ENCODE measurements at regions of chr1 and their contacts with region 1.

Region 1: GRCh38 chr1:25487628-25488027 is 55.8 kb upstream of the LDLRAP1 start:
- DNase-seq: peak; percentile 51
- H3K4me3 Mint-ChIP-seq: no peak overlapping the region
- H3K27ac Mint-ChIP-seq: peak overlapping the region; percentile 5
- H3K4me1 Mint-ChIP-seq: peaks cover 5% of the 10 kb centered on the region
- H3K27me3 Mint-ChIP-seq: no peaks in the 10 kb centered on the region

Region 2: DNA sequence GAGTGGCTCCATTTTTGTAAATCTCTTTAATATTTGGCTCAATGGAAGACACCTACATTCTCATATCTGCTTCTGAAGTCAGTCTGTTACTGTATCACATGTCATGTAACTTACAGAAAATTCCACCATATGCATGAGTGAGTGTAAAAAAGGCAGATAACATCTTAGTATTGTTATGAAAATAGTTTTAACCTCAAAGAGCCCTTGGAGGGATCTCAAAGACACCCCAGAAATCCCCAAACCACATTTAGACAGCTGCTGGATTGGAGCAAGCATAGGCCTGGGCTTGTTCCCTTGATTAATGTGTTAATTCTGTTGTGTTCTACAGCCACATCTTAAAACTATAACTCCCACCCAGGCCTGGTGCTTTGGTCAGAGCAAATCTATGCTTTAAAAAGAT is 40.1 kb before region 1 on chr1:
- CTCF ChIA-PET with region 1: interaction called, 11 read pairs
- intact Hi-C with region 1: no loop called
- DNase-seq: peak; percentile 50
- H3K4me3 Mint-ChIP-seq: no peak overlapping the region
- H3K27ac Mint-ChIP-seq: peak overlapping the region; percentile 77
- H3K4me1 Mint-ChIP-seq: peaks cover 34% of the 10 kb centered on the region
- H3K27me3 Mint-ChIP-seq: no peaks in the 10 kb centered on the region

Region 3: DNA sequence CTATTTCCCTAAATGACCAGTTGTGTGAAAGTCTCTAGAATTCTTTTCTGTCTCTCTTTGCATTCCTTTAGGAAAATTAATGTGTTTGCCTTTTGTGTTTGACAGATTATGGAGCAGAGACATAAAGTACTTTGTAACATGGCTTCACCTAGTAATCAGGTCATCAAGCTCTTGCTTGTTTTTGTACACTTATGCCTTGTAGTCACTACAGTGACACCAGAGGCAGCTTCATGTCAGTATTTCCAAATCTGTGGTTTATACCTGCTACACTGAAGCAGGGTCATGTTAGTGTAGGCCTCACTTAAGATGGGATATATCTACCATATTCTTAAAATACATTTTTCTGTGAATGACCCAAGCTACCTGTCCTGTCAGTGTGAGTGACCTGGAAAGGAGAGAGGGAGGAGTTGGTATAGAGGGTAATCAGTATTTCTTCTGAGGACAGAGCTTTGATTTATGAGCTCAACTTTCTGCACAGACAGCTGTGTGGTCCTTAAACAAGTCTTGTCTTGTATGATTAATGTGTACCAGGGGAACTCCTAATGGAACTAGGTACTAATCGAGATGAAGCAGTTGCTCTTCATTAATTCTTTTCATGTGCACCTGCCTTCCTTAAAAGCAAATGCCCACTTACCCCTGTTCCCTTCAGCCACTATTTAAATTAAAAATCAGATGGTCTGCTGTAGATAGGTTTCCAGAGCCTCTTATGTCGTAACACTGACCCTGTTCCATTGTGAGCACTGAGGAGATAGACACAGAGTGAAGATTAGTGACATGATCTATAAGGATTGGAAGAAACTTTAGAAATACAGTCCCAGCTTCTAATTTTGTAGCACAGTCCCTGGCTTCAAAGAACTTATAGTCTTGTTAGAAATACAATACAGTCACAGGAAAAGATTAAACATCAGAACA is 11.2 kb before region 1 on chr1:
- CTCF ChIA-PET with region 1: interaction called, 39 read pairs
- intact Hi-C with region 1: no loop called
- DNase-seq: no peak
- H3K4me3 Mint-ChIP-seq: no peak overlapping the region
- H3K27ac Mint-ChIP-seq: peak overlapping the region; percentile 54
- H3K4me1 Mint-ChIP-seq: peaks cover 57% of the 10 kb centered on the region
- H3K27me3 Mint-ChIP-seq: no peaks in the 10 kb centered on the region

Region 4: DNA sequence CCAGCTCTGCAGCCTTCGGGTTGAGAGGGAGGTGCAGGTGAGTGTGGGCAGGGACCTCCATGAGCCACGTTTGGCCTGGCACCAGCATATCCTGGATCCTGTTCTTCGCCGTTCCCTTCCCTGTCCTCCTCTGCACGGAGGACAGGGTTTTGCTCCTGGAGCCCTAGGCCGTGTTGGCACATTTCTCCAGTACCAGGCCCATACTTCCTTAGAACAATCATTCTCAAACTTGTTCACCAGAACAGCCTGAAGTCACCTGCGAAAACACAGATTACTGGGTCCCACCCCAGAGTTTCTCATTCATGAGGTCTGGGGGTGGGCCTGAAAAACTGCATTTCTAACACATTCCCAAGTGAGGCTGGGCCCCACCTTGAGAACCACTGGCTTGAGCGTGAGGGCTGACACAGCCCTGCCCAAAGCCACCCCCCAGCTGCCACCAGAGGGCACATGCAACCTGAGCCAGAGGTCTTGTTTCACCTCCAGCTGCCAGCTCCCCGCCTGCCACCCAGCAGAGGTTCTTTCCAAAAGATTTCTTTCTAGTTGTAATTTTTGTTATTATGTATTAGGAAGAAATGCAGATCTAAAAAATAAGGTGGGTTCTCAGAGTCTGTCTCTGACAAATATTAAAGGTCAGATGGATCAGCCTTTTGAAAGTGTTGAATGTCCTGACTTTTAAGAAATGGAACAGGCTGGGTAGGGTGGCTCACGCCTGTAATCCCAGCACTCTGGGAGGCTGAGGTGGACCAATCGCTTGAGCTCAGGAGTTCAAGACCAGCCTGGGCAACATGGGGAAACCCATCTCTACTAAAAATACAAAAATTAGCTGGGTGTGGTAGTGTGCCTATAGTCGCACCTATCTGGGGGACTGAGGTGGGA is 16.2 kb after region 1 on chr1:
- CTCF ChIA-PET with region 1: interaction called, 13 read pairs
- intact Hi-C with region 1: no loop called
- DNase-seq: peak; percentile 86
- H3K4me3 Mint-ChIP-seq: no peak overlapping the region
- H3K27ac Mint-ChIP-seq: peak overlapping the region; percentile 65
- H3K4me1 Mint-ChIP-seq: peaks cover 40% of the 10 kb centered on the region
- H3K27me3 Mint-ChIP-seq: no peaks in the 10 kb centered on the region